B cell (primary cell): ENCODE measurements at regions of chr12 and their contacts with region 1.

Region 1: DNA sequence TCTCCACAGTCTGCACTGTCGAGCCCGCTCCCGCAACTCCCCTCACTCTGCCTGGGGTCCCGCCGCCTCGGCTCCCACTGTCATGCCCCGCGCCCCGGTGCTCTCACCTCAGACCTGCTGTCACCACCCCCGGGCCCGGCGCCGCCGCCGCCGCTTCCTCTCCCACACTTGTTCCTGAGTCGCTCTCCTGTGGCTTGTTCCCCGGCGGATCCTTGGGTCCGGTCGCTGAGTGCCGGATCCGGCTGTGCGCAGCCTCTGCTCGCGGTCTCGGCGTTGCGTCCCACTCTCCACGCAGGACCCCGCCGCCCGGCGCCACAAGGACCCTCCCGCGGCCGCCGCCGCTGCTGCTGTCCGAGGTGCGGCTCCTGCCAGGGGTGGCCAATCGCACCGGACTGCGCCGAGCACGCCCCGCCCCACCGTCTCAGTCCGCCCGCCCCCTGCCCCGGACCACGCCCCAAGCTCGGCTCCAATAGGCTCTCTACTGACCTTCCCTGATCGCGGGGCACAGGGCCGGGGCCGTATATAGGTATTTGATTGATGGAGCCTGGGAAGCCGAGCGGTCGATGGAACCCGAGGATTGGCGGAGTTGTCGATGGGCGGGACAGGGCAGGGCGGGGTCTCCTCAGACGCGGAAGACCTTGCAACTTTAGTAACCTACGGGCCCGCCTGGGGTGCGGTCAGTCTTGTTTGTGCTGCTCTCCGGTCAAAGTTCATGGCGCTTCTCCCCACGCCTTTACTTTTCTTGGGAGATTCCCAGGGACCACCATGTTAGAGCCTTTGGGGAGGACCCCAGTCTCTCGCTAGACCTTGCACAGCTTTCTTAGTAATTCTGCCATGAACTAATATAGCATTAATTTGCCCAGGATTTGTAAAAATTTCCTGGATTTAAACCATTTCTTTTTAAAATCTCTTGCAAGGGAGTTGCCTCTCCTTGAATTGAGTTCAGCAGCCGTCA is at the start of gene TAOK3:
- DNase-seq: peak; percentile 97
- ATAC-seq: peak; percentile 87
- H3K4me3 ChIP-seq: peak within 1 kb of the TSS; percentile 89 to 96 (median 90)
- H3K4me3 Mint-ChIP-seq: peak within 1 kb of the TSS; percentile 84
- H3K27ac ChIP-seq: peak within 1 kb of the TSS; percentile 77 to 79
- H3K27ac Mint-ChIP-seq: peak within 1 kb of the TSS; percentile 81
- H3K4me1 ChIP-seq: peaks cover 32 to 40% of the 10 kb centered on the region in 2 donors
- H3K4me1 Mint-ChIP-seq: peaks cover 48% of the 10 kb centered on the region
- H3K27me3 ChIP-seq: no peaks in the 10 kb centered on the region
- H3K27me3 Mint-ChIP-seq: no peaks in the 10 kb centered on the region
- CTCF ChIP-seq: no peak
- total RNA-seq, gene TAOK3: 69.6 and 80.4 TPM in 2 replicates

Region 2: GRCh38 chr12:118016424-118017264 is 356.2 kb before region 1 on chr12 and contains the start of gene RFC5:
- CTCF ChIA-PET with region 1: no interaction called
- POLR2A ChIA-PET with region 1: no interaction called
- intact Hi-C with region 1: loop called (anchors 1 kb)
- DNase-seq: peak; percentile 98
- ATAC-seq: peak; percentile 98
- H3K4me3 ChIP-seq: peak within 1 kb of the TSS; percentile 51 to 92 (median 81)
- H3K4me3 Mint-ChIP-seq: peak within 1 kb of the TSS; percentile 91
- H3K27ac ChIP-seq: peak within 1 kb of the TSS in 1 of 2 donors; percentile 71
- H3K27ac Mint-ChIP-seq: peak within 1 kb of the TSS; percentile 95
- H3K4me1 ChIP-seq: peaks cover 11 to 16% of the 10 kb centered on the region in 2 donors
- H3K4me1 Mint-ChIP-seq: peaks cover 16% of the 10 kb centered on the region
- H3K27me3 ChIP-seq: no peaks in the 10 kb centered on the region
- H3K27me3 Mint-ChIP-seq: no peaks in the 10 kb centered on the region
- CTCF ChIP-seq: no peak
- total RNA-seq, gene RFC5: 15.0 and 22.7 TPM in 2 replicates

Region 3: DNA sequence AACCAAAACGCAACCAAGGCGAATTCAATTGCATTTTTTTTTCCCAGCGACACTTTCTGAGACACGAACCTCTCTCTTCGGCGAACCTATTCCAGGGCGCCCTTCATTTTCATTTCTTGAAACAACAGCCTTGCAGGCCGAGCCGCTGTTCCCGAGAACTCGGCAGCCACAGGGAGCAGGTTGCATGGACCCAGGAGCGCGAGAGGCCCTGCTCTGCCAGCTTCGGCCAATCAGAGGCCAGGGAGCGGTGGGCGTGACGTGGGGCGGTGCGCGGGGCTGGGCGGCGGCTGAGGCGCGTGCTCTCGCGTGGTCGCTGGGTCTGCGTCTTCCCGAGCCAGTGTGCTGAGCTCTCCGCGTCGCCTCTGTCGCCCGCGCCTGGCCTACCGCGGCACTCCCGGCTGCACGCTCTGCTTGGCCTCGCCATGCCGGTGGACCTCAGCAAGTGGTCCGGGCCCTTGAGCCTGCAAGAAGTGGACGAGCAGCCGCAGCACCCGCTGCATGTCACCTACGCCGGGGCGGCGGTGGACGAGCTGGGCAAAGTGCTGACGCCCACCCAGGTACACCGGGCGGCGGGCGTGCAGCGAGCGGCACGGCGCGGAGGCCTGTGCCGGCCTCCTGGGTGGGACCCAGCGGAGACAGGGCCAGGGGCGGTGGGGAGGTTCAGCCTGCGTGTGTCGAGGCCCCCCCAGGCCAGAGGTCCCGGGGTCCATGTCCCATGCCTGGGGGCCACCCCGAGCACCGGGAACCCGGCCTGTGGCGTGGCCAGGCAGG is 236.8 kb before region 1 on chr12 and contains the start of gene PEBP1:
- CTCF ChIA-PET with region 1: interaction called, 31 read pairs
- POLR2A ChIA-PET with region 1: interaction called, 12 read pairs
- intact Hi-C with region 1: loop called (anchors 1 kb)
- DNase-seq: peak; percentile 91
- ATAC-seq: peak; percentile 100
- H3K4me3 ChIP-seq: peak within 1 kb of the TSS; percentile 66 to 91 (median 73)
- H3K4me3 Mint-ChIP-seq: peak within 1 kb of the TSS; percentile 99
- H3K27ac ChIP-seq: peak within 1 kb of the TSS; percentile 26 to 77
- H3K27ac Mint-ChIP-seq: peak within 1 kb of the TSS; percentile 92
- H3K4me1 ChIP-seq: peaks cover 6 to 19% of the 10 kb centered on the region in 2 donors
- H3K4me1 Mint-ChIP-seq: peaks cover 28% of the 10 kb centered on the region
- H3K27me3 ChIP-seq: no peaks in the 10 kb centered on the region
- H3K27me3 Mint-ChIP-seq: no peaks in the 10 kb centered on the region
- CTCF ChIP-seq: no peak
- total RNA-seq, gene PEBP1: 94.0 and 106 TPM in 2 replicates

Region 4: DNA sequence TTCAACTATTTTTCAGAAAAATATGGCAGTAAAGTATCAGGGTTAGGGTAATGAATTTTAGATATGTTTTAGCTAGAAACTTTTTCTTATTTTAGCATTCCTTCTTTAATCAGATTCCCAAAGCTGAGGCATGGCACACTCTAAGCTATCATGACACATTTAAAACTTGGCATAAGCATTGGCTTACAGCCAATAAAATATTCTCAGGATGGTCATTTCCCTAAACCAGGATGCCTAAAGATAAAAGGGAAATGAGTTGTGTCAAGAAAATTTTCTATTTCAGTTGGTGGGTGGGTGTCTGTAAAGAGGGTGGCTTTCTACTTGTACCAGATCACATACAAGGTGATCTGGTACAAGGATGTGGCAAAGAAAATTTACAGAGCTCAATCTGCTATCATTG is 189.1 kb before region 1 on chr12:
- CTCF ChIA-PET with region 1: interaction called, 221 read pairs
- POLR2A ChIA-PET with region 1: interaction called, 5 read pairs
- intact Hi-C with region 1: loop called (anchors 1 kb)
- DNase-seq: no peak
- ATAC-seq: no peak
- H3K4me3 ChIP-seq: no peak overlapping the region
- H3K4me3 Mint-ChIP-seq: no peak overlapping the region
- H3K27ac ChIP-seq: peak overlapping the region in 1 of 2 donors; percentile 40
- H3K27ac Mint-ChIP-seq: no peak overlapping the region
- H3K4me1 ChIP-seq: peaks cover 3 to 5% of the 10 kb centered on the region in 2 donors
- H3K4me1 Mint-ChIP-seq: peaks cover 13% of the 10 kb centered on the region
- H3K27me3 ChIP-seq: no peaks in the 10 kb centered on the region
- H3K27me3 Mint-ChIP-seq: no peaks in the 10 kb centered on the region
- CTCF ChIP-seq: no peak

Region 5: DNA sequence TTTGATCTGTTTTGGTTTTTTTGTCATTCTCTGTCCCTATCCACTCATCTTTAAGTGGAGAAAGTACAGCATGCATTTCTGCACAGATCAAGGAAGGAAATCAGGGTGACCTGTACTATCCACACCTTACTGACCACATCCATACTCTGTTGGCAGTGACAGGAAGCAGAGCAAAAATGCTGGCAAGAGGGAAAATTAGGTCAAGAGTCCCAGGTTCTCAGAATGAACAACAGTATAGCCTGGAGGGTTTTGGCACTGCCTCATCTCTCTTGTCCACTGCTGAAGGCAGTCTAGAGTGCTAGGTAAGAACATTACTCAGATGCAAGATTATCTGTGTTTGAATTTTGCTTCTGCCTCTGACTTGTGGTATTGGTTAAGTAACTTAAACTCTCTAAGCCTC is 70.8 kb before region 1 on chr12:
- CTCF ChIA-PET with region 1: interaction called, 39 read pairs
- POLR2A ChIA-PET with region 1: interaction called, 7 read pairs
- intact Hi-C with region 1: loop called (anchors 5 kb)
- DNase-seq: no peak
- ATAC-seq: no peak
- H3K4me3 ChIP-seq: no peak overlapping the region
- H3K4me3 Mint-ChIP-seq: no peak overlapping the region
- H3K27ac ChIP-seq: no peak overlapping the region
- H3K27ac Mint-ChIP-seq: no peak overlapping the region
- H3K4me1 ChIP-seq: peaks cover 14 to 15% of the 10 kb centered on the region in 2 donors
- H3K4me1 Mint-ChIP-seq: peaks cover 39% of the 10 kb centered on the region
- H3K27me3 ChIP-seq: no peaks in the 10 kb centered on the region
- H3K27me3 Mint-ChIP-seq: no peaks in the 10 kb centered on the region
- CTCF ChIP-seq: no peak

Region 6: GRCh38 chr12:118404876-118405521 is 32.2 kb after region 1 on chr12:
- CTCF ChIA-PET with region 1: interaction called, 14 read pairs
- POLR2A ChIA-PET with region 1: no interaction called
- intact Hi-C with region 1: no loop called
- DNase-seq: peak; percentile 55
- ATAC-seq: no peak
- H3K4me3 ChIP-seq: no peak overlapping the region
- H3K4me3 Mint-ChIP-seq: no peak overlapping the region
- H3K27ac ChIP-seq: no peak overlapping the region
- H3K27ac Mint-ChIP-seq: no peak overlapping the region
- H3K4me1 ChIP-seq: no peaks in the 10 kb centered on the region
- H3K4me1 Mint-ChIP-seq: no peaks in the 10 kb centered on the region
- H3K27me3 ChIP-seq: no peaks in the 10 kb centered on the region
- H3K27me3 Mint-ChIP-seq: no peaks in the 10 kb centered on the region
- CTCF ChIP-seq: peak; percentile 87

Region 7: GRCh38 chr12:118520214-118521035 is 147.6 kb after region 1 on chr12:
- CTCF ChIA-PET with region 1: no interaction called
- POLR2A ChIA-PET with region 1: no interaction called
- intact Hi-C with region 1: no loop called
- DNase-seq: no peak
- ATAC-seq: no peak
- H3K4me3 ChIP-seq: no peak overlapping the region
- H3K4me3 Mint-ChIP-seq: no peak overlapping the region
- H3K27ac ChIP-seq: no peak overlapping the region
- H3K27ac Mint-ChIP-seq: no peak overlapping the region
- H3K4me1 ChIP-seq: no peaks in the 10 kb centered on the region
- H3K4me1 Mint-ChIP-seq: no peaks in the 10 kb centered on the region
- H3K27me3 ChIP-seq: peaks cover 0 to 3% (median 0%) of the 10 kb centered on the region in 4 experiments
- H3K27me3 Mint-ChIP-seq: peaks cover 3% of the 10 kb centered on the region
- CTCF ChIP-seq: no peak